AG04449 (cell line): ENCODE measurements at regions of chr16 and their contacts with region 1.

Region 1: DNA sequence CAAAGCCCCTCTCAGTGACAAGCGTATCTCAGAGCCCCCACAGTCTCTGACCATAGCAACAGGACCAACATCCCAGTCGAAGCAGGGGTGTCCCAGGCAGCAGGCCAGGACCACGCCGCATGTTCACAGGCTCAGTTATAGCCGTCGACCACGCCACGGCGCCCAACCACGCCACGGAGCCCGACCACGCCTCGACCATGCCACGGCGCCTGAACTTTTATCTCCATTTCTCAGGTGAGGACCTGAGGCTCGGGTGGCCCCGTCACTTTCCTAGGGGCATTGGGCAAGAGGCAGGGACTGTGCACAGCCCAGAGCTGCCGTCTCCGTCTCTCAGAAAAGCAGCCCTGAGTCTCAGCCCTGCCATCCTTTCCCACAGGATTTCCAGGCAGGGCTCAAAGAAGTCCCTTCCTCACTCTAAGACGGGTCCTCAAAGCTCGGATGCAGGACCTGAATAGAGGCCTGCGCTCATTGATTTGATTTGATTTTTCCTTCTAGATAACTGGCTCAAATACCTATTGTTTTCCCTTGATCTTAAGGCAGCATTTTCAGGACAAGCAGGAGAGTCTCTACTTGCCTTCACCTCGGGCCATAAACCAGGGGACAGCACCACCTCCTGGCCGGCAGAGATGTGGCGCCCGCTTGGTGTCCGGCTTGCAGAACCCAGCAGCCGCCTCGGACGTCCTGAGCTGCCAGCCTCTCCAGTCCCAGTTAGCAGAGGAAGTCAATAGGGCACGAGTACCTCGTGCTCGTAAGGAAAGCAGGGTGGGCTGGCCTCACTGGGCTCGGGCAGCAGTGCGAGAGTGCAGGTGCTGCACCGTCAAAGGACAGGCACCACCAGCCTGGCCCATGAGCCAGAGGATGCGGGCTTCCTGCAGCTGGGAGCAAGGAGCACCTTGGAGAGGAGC is 38.7 kb downstream of the C16orf95 start:
- DNase-seq: peak; percentile 31
- H3K4me3 ChIP-seq: no peak overlapping the region
- CTCF ChIP-seq: peak; percentile 97

Region 2: GRCh38 chr16:87067836-87068761 is 210.3 kb before region 1 on chr16:
- CTCF ChIA-PET with region 1: interaction called, 69 read pairs
- POLR2A ChIA-PET with region 1: no interaction called
- DNase-seq: no peak
- H3K4me3 ChIP-seq: no peak overlapping the region
- CTCF ChIP-seq: no peak

Region 3: GRCh38 chr16:87203060-87203656 is 75.3 kb before region 1 on chr16:
- CTCF ChIA-PET with region 1: interaction called, 18 read pairs
- POLR2A ChIA-PET with region 1: no interaction called
- DNase-seq: peak; percentile 60
- H3K4me3 ChIP-seq: no peak overlapping the region
- CTCF ChIP-seq: peak; percentile 97

Region 4: DNA sequence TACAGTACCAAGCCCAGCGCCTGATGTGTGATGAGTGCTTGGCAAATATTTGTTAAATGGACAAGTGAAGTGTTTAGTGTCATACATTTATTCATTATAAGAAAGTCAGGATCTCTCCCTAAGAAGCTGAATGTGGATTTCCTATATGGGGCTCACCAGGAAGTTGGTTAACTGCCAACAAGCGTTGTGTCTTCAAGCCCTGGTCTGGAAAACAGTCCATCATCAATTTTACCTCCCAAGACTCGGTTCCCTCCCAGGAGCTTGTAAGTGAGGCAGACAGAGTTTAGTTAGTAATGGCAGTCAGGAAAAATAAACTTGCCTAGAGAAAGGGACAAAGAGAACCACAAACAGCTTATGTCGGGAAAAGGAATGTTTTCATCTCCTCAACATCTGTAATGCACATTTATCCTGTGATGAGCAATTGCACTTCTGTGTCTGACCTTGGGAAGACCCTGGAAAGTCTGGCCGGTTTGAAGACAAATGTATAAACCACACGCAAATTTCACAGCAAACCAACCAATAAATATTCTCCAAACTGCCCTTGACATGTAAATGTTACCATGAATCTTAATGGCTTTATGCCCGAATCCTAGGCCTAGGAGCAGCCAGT is 10.4 kb after region 1 on chr16:
- CTCF ChIA-PET with region 1: interaction called, 49 read pairs
- POLR2A ChIA-PET with region 1: no interaction called
- DNase-seq: peak; percentile 67
- H3K4me3 ChIP-seq: no peak overlapping the region
- CTCF ChIP-seq: no peak

Region 5: DNA sequence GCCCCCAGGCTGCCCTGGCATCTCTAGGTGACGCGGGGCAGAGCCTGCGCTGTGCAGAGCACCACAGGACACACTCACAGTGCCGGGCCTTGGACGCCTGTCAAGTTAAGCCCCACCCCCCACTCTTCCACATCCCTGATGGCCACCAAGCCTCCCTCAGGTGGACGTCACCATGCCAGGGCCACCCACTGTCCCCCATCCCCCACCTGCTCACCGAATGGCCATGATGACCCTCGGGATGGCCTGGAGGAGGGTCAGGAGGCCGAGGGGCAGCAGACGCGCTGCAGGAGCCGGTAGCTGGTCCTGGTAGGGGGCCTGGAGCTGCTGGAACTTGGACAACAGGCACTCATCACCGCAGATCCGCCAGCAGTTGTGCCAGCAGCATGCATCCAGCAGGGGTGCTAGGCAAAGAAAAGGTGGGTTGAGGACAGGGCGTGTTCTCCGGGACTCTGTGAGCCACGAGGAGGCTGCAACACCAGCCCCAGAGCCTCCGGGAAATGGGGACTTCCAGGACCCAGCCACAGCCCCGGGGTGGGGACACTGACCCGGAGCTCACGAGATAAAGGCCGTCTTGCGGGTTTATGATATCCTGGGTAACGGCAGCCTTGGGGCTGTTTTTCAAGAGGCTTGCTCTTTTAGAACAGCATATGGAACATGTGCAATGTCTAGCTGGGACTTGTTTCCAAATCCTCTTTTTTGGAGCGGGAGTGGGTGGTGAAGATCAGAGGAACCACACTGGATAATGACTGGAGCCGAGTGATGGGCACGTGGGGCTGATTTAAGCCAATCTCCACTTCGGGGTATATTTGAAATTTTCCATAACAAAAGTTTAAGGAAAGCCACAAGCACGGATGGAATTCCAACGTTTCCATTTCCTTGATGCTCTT is 27.3 kb after region 1 on chr16:
- CTCF ChIA-PET with region 1: interaction called, 38 read pairs
- POLR2A ChIA-PET with region 1: no interaction called
- DNase-seq: peak; percentile 16
- H3K4me3 ChIP-seq: peak overlapping the region; percentile 39
- CTCF ChIP-seq: peak; percentile 54

Region 6: DNA sequence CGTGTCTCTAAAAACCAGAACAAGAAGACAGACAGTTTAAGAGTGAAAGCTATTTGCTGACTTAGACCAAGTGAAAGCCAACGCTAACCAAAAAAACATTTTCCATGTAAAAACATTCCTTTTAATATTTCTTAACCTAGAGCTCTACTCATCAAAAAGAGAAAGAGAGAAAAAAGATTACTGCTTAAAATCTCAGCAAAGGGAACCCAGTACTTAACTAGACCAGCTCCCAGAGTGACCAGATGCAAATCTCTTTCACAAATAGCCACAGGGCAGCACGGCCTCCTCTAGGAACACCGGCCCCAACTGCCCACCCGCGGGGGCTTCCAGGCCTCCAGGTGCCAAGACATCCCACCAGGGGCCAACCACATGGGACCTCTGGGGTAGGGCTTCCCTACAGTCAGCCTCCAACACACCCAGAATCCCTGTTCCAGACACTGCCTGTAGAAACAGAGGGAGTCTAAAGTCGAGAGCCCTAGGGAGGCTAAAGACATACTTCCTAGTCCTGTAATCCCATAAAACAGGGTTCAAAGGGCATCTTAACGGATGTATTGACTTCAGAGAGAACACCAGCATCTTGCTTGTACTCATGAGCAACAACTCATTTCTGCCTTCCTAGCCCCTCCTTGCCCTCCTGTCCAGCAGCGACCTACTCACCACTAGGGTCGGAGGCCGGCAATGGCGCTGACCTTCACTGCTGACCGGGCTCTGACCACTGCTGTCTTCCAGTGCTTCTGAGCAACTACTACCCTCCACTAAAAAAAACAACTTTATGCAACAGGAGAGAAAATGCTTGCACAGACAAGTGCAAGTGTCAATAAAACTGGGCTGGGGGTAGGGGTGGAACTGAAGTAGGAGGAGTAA is 193.1 kb after region 1 on chr16:
- CTCF ChIA-PET with region 1: no interaction called
- POLR2A ChIA-PET with region 1: no interaction called
- DNase-seq: no peak
- H3K4me3 ChIP-seq: no peak overlapping the region
- CTCF ChIP-seq: no peak